Psoas muscle (tissue), 8 donors: ENCODE measurements at regions of chr11 and their contacts with region 1.

Region 1: DNA sequence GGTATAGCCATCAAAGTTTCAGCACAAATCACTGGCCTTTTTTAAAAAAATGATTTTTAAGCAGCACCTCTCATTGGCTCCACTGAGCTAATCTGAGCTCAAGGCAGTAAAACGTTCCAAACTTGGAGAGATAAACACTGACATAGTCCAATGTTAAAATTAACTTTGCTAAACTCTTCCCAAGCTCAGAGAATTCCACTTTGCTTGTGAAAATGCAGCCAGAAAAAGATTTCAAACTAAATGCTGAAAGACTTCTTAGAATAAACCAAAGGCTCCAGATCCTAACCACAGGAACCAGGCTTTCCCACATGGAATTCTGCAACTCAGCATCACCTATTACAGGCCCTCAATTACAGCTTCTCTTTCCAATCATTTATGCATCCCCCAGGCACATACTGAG is 84.7 kb upstream of the GDPD4 start:
- DNase-seq: no peak
- ATAC-seq: peak in 2 of 4 donors; percentile 39 to 40
- H3K4me3 ChIP-seq: no peak overlapping the region
- H3K27ac ChIP-seq: peak overlapping the region; percentile 7
- H3K4me1 ChIP-seq: peaks cover 35% of the 10 kb centered on the region
- H3K27me3 ChIP-seq: no peaks in the 10 kb centered on the region
- CTCF ChIP-seq: no peak

Region 2: DNA sequence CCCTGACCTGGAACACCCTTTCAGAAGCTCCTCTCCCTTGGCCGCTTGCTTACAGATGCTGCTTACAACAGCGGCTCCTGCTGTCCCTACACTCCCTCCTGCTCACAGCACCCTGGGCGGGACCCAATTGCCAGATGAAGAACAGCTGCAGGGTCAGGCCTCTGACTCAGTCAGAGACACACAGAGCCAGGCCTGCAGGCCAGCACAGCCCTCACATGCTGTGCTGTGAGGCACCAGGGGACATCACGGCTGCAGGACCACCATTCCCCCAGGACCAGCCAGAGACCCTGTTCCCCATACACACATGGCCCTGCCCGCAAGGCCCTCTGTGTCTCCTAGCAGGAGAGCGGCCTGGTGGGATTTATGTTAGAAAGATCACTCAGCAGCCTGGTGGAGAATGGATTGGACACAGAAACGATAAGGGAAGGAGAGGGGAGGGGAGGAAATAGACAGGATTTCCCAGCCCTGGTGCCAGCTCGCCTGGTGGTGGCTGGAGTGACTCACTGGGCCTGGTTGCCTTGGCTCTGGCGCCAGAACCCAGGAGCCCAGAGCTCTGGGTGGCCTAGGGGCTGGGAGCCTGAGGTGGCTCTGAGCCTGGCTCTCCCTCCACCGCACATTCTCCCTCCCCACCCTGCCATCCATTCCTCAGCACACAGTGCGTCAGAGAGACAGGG is 312.7 kb before region 1 on chr11:
- intact Hi-C with region 1: no loop called
- DNase-seq: peak; percentile 88 to 90
- ATAC-seq: peak; percentile 86 to 89 (median 88)
- H3K4me3 ChIP-seq: no peak overlapping the region
- H3K27ac ChIP-seq: peak overlapping the region; percentile 60
- H3K4me1 ChIP-seq: no peaks in the 10 kb centered on the region
- H3K27me3 ChIP-seq: no peaks in the 10 kb centered on the region
- CTCF ChIP-seq: peak; percentile 13

Region 3: DNA sequence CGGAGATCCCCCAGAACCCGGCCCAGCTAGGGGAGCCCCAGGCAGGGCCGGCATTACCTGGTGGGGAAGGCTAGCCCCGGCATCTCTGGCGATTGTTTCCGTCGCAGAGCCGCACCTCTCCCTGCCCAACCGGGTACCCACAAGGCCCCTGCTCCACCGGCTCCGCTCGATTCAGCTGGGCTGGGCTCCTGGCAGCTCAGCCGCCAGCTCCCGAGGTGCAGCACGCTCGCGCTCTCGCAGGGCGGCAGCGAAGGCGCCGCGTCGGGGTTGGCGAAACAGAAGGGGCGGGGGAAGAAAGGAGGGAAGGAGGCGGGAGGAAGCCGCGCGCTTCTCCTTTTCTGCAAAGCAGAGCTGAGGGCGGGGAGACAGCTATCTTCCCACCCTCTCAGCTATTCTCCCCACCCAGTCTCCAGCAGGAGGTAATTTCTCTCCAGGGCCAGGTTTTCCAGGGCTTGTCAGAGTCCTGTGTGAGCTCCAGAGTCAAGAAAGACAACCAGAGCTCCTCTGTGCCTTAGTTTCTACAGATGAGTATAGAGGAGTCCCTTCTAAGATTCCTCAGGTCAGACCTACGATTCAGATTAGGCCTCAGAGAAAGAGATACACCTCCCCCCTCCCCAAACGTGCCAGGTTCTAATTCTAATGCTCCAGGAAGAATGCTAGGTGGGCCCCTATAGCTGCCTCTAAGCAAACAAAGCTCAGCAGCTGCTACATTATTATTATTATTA is 25.7 kb after region 1 on chr11:
- intact Hi-C with region 1: loop called in 1 of 2 experiments (anchors 2 kb)
- DNase-seq: peak; percentile 82 to 91
- ATAC-seq: peak; percentile 85 to 93 (median 90)
- H3K4me3 ChIP-seq: peak overlapping the region; percentile 81
- H3K27ac ChIP-seq: peak overlapping the region; percentile 85
- H3K4me1 ChIP-seq: peaks cover 14% of the 10 kb centered on the region
- H3K27me3 ChIP-seq: no peaks in the 10 kb centered on the region
- CTCF ChIP-seq: no peak